Psoas muscle (tissue), 8 donors: ENCODE measurements at regions of chr2 and their contacts with region 1.

Region 1: DNA sequence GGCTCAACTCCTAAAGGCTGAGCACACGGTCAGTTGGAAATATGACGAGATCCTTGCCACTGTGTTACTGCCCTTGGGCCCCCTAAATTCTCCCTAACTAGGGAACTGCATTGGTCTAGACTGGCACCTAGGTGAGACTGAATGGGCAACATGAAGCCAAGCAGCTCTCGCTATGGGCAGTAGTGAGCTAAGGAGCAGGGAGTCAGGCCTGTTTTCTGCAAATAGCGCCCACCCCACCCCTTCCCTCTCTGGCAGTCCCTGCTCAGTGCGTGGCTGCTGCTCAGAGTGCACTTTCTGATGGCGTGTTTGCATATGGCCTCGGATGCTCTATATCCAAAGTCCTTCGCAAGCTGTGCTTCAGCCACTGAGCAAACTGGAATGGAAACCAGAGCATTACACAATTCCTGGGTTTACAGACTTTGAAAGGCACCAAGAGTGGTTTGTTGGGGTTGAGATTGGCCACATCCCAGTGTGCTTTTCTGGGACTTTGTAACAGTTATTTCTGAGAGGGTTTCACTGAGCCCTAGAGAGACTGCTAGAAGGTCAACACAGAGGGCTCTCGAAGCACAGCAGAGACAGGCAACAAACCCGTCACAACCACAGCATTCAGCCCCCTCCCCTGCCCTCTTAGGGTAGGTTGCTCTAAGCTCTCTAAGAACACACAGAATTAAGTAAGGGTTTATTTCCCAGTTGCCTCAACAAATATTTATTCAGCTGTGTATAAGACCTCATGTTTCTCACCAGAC is 419.9 kb downstream of the STK39 start:
- DNase-seq: no peak
- ATAC-seq: peak; percentile 15 to 65 (median 50)
- H3K4me3 ChIP-seq: no peak overlapping the region
- H3K27ac ChIP-seq: no peak overlapping the region
- H3K4me1 ChIP-seq: peaks cover 16% of the 10 kb centered on the region
- H3K27me3 ChIP-seq: no peaks in the 10 kb centered on the region
- CTCF ChIP-seq: no peak

Region 2: GRCh38 chr2:167749016-167749415 is 78.5 kb before region 1 on chr2:
- intact Hi-C with region 1: loop called in 1 of 2 experiments (anchors 5 kb)
- DNase-seq: peak in 1 of 2 donors; percentile 52
- ATAC-seq: peak; percentile 82 to 90 (median 88)
- H3K4me3 ChIP-seq: peak overlapping the region; percentile 62
- H3K27ac ChIP-seq: peak overlapping the region; percentile 96
- H3K4me1 ChIP-seq: peaks cover 20% of the 10 kb centered on the region
- H3K27me3 ChIP-seq: no peaks in the 10 kb centered on the region
- CTCF ChIP-seq: no peak

Region 3: GRCh38 chr2:167764772-167765341 is 62.7 kb before region 1 on chr2:
- intact Hi-C with region 1: no loop called
- DNase-seq: no peak
- ATAC-seq: peak in 3 of 4 donors; percentile 47 to 72 (median 61)
- H3K4me3 ChIP-seq: no peak overlapping the region
- H3K27ac ChIP-seq: no peak overlapping the region
- H3K4me1 ChIP-seq: peaks cover 4% of the 10 kb centered on the region
- H3K27me3 ChIP-seq: no peaks in the 10 kb centered on the region
- CTCF ChIP-seq: no peak